Left cardiac atrium (tissue), 4 donors: ENCODE measurements at regions of chr15 and their contacts with region 1.

Region 1: DNA sequence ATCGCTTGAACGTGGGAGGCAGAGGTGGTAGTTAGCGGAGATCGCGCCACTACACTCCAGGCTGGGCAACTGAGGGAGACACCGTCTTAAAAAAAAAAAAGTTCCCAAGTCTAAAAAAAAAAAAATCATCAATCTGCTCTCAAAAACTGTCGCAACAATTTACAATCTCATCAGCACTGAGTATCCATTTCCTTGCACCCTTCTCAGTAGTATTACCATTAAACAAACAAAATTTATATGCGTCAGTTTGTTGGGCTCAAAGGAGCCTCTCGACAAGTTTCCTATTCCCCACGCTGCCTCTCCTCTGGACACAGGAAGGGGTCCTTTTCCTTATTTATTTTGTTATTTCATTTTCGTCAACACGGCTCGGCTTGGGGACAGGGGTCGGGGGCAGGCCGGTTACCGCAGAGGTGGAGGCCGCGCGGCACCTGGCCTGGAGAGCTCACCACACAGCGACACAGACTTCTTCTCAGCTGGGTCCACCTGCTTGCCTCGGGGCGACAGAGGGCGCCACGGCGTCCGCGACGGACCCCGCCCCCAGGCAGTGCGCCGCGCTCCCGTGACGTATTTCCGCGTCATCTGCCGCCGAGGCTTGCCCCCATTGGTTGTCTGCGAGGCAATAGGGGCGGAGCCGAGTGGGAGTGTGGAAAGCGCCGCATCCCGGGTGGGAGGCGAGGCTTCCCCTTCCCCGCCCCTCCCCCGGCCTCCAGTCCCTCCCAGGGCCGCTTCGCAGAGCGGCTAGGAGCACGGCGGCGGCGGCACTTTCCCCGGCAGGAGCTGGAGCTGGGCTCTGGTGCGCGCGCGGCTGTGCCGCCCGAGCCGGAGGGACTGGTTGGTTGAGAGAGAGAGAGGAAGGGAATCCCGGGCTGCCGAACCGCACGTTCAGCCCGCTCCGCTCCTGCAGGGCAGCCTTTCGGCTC is at the start of gene MAP2K1:
- DNase-seq: peak; percentile 99
- ATAC-seq: peak; percentile 98 to 99
- total RNA-seq, gene MAP2K1: 40.3 to 52.3 TPM

Region 2: GRCh38 chr15:66497502-66498455 is 111.3 kb after region 1 on chr15 and contains the start of gene SNAPC5:
- intact Hi-C with region 1: loop called in 1 of 2 experiments (anchors 10 kb)
- DNase-seq: peak; percentile 98
- ATAC-seq: peak; percentile 96 to 99
- total RNA-seq, gene SNAPC5: 32.3 to 33.3 TPM

Region 3: DNA sequence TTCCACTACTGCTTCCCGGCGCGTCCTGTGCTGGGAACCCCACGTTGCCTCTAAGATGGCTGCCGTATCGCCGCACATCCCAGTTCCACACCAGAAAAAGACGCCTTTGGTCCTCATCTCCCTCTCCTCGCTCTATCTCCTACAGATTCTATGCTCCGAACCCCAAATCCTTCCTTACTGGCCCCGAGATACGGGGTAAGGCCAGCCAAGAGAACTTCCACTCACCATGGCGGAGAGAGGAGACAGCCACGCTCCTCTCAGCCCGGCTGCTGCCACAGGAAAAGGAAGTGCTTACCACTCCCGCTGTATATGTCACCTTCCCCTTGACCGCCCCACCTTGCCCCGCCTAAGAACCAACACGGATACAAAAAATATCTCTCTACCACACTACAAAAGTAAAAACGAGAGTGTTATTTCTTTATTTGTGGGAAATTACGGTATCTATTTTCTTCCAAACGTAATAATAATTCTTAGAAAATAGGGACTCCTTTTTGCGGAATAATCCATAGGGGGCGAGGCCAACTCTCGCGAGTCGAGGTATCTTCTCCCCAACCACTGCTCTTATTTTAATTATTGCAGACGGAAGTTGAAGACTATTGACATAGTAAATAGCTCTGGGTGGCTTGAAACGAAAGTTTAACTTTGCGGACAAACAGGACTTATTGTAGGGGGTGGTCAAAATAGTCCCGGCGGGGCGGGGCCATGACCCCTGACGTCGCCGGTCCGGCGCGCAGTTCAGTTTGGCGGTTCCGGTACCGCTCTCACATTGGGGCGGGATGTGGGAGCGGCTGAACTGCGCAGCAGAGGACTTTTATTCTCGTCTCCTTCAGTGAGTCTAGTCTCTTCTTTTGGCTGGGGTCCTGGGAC is 118.3 kb after region 1 on chr15 and contains the starts of genes RPL4 and ZWILCH:
- intact Hi-C with region 1: loop called (anchors 2 to 10 kb)
- DNase-seq: peak; percentile 85
- ATAC-seq: peak; percentile 94 to 96
- total RNA-seq, gene RPL4: 1,466 to 1,535 TPM
- total RNA-seq, gene ZWILCH: 2.3 to 3.5 TPM